GM10248 (cell line): ENCODE measurements at regions of chr7 and their contacts with region 1.

Region 1: GRCh38 chr7:134432296-134433152 is 26.4 kb downstream of the AKR1B1 start:
- DNase-seq: peak; percentile 88
- CTCF ChIP-seq: peak; percentile 69

Region 2: DNA sequence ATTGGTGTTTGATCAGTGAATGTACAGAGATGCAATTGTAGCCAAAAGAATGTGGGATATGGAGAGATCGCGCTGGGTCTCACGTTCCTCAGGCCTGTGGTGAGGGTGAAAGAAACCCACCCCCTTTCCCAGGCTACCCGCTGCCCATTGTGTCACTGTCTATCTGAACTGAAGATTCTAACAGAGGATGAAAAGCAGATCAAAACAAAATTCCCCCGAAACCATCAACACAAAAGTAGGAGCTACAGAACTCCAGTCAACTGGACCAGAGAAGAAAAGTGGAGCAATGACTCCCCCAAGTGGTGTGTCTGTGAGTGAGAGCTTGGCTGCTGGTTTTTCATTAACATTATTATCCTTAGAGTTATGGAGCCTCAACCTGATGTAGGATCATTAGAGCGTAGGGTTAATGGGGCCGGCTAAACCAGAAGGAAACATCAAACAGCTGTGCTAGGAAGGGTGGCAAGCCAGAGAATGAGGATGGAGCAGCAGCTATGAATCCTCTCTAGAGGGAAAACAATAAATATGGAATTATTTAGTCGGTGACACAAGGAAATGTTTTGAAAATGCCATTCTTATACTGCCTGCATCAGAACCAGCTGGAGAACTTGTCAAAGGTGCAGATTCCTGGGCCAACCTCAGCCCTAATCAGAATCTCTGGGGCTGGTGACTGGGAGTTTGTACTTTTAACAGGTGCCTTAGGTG is 11.9 kb before region 1 on chr7:
- CTCF ChIA-PET with region 1: interaction called, 12 read pairs
- POLR2A ChIA-PET with region 1: no interaction called
- DNase-seq: peak; percentile 49
- CTCF ChIP-seq: peak; percentile 40

Region 3: DNA sequence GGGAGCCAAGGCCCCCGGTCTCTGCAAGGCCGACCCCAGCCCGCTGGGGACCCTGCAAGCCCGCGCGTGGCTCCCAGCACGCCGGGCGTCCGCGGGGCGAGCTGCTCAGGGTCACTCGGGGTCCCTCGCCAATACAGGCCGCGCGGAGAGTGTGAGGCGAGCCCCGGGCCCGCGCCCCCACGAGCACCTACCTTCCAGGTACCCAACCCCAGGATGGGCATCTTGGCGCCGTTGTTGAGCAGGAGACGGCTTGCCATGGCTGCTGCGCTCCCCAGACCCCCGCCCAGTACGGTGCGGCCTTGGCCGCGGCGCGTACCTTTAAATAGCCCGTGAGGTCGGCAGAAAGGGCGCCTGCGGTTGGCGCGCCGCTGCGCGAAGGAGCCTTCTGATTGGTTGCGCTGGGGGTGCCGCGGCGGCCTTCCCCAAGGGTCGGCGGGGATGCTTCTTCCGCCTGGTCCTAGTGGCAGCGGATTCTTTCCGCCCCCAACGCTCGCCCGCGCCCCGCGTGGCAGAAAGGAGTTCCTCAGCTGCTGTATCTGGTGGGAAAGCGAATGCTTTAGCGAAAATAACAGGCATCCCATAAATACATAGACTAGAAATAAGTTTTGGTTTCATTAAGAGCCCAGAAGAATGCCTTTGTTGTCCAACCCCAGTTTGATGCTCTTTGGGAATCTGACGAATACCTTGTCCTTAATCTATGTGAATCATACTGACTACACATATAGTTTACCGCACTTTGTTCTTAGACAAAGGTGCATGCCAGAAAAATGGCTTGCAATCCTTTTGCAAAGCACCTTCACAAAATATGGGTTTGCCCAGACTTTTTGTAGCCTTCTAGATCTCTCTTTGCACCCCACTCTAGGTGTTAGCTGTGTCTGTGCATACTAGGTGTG is 26.5 kb after region 1 on chr7 and contains the start of gene AKR1B1:
- CTCF ChIA-PET with region 1: interaction called, 20 read pairs
- POLR2A ChIA-PET with region 1: interaction called, 3 read pairs
- DNase-seq: peak; percentile 96
- CTCF ChIP-seq: peak; percentile 73

Region 4: DNA sequence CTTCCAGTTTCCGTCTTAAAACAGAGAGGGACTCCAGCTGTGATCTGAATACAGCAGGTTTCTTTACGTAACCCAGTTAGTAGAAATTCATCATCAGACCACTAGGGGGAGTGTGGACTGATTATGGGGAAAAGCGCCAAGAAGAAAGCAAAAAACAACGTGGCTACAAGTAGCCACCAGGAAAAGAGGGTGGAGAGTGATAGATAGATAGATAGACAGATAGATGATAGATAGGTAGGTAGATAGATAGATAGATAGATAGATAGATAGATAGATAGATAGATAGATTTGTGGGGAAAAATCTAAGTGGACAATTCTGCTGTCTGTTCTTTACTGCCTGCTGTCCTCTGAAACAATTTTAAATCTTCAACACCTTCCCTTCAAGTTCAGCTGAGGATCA is 82.1 kb after region 1 on chr7:
- CTCF ChIA-PET with region 1: interaction called, 152 read pairs
- POLR2A ChIA-PET with region 1: no interaction called
- DNase-seq: peak; percentile 64
- CTCF ChIP-seq: peak; percentile 71

Region 5: DNA sequence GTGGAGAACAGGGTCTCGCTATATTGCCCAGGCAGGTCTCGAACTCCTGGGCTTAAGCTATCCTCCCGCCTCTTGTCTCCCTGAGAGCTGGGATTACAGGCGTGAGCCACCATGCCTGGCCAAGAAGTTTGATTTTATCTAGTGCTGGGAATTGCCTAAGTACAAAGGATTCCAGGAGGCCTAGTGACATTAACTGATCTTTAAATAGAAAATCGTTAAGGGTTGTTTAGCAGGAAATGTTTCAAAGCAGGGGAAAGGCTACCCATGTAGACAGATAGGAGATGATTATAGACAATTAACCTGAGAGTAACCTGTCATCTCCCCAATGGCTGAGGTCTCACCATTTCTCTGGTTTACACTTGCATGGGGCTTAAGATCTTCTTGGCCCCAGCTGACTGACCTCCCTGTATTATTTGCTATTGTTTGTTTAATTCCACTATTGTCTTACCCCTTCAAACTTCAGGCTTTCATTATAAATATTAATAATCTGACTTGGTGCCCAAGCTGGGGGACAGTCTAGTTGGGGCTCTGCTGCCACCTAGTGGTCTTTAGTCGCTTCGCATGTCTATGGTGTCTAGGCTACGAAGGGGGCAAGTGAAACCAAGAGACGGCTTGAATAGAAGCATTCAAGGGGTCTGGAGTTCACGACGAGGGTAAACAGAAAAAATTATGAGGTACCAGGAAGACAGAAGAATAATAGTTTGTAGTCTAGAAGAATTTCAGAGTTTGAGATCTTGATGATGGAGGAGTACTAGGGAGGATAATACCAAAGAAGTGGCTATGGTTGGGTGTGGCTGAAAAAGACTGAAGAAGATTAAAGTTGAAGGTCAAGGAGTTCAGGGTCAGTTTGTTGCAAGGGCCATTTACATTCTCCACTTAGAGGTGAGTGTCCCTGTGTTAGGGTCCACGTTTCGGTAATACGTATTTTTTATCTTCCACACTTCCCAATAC is 173.7 kb after region 1 on chr7:
- CTCF ChIA-PET with region 1: interaction called, 77 read pairs
- POLR2A ChIA-PET with region 1: no interaction called
- DNase-seq: peak; percentile 58
- CTCF ChIP-seq: peak; percentile 77

Region 6: DNA sequence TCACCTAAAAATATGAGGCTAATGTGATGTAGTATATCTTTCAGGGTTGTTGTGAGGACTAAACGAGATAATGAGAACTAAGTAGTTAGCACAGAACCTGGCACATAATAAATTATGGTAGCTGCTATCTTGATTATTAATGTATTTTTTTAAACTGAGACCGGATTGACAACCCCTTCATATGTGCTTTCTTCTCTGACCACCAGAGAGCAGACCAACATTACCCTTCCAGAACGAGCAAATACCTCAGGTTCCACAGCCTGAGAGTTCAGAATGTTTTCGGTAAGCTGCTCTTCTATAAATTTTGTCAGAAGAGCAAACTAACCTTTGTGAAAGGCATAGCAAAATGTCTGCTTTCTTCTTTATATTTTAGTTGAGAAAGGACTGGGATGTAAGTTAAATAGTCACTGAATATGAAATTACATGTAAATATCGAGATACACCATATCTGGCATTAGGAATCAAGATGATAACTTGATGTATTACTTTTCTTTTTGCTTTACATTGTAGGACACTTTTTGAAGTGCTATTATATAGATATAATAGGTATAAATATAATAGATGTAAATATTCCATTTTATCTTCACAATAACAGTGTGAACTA is 200.5 kb after region 1 on chr7:
- CTCF ChIA-PET with region 1: no interaction called
- POLR2A ChIA-PET with region 1: no interaction called
- DNase-seq: peak; percentile 26
- CTCF ChIP-seq: peak; percentile 61

Region 7: GRCh38 chr7:134701272-134701671 is 268.7 kb after region 1 on chr7:
- CTCF ChIA-PET with region 1: no interaction called
- POLR2A ChIA-PET with region 1: no interaction called
- DNase-seq: peak; percentile 29
- CTCF ChIP-seq: peak; percentile 45